ENCODE measurements at regions of chr5 and their contacts with region 1.

Region 1: DNA sequence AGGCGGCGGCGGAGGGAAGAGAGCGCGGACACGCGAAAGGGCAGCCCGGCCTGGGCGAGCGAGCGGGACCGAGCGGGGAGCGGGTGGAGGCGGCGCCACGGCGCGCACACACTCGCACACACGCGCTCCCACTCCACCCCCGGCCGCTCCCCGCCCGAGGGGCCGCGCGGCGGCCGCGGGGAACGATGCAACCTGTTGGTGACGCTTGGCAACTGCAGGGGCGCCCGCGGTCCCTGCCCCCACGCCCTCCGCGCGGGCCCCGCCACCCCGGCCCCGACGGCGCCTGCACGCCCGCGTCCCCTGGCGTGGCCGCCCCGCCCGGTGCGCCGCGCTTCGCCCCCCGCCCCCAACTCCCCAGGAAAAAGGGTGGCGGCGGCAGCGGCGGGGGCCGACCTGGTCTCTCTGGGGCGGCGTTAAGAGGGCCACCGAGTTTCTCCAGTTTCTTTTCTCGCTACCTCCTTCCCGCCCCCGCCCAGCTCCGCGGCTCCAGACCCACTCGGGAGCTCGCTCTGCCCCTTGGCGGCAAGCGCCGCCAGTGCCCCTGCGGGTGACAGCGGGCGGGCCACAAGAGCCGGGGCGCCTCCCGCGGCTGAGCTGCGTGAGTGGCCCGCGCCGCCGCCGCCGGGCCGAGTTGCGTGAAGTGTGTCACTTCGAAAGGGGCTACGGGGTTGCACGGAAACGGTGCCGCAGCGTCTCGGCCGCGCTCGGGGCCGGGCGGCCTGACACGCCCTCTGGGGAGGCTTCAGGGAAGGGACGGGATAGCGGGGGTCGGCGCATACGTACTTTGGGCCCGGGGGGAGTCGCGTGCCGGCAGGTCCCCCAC is at the start of gene NR3C1:
- DNase-seq: peak; percentile 83 to 92 (median 90)
- ATAC-seq: peak; percentile 85
- H3K4me3 ChIP-seq: peak within 1 kb of the TSS; percentile 98
- H3K4me3 Mint-ChIP-seq: peak within 1 kb of the TSS; percentile 93 to 99 (median 96)
- H3K27ac ChIP-seq: peak within 1 kb of the TSS; percentile 91
- H3K27ac Mint-ChIP-seq: peak within 1 kb of the TSS; percentile 98 to 100 (median 99)
- H3K4me1 ChIP-seq: peaks cover 17 to 29% of the 10 kb centered on the region in 2 donors
- H3K4me1 Mint-ChIP-seq: peaks cover 30 to 48% (median 40%) of the 10 kb centered on the region in 7 donors
- H3K27me3 ChIP-seq: no peaks in the 10 kb centered on the region
- H3K27me3 Mint-ChIP-seq: peaks cover 0 to 2% (median 0%) of the 10 kb centered on the region in 5 donors
- total RNA-seq, gene NR3C1: 68.0 to 140 (median 121) TPM

Region 2: DNA sequence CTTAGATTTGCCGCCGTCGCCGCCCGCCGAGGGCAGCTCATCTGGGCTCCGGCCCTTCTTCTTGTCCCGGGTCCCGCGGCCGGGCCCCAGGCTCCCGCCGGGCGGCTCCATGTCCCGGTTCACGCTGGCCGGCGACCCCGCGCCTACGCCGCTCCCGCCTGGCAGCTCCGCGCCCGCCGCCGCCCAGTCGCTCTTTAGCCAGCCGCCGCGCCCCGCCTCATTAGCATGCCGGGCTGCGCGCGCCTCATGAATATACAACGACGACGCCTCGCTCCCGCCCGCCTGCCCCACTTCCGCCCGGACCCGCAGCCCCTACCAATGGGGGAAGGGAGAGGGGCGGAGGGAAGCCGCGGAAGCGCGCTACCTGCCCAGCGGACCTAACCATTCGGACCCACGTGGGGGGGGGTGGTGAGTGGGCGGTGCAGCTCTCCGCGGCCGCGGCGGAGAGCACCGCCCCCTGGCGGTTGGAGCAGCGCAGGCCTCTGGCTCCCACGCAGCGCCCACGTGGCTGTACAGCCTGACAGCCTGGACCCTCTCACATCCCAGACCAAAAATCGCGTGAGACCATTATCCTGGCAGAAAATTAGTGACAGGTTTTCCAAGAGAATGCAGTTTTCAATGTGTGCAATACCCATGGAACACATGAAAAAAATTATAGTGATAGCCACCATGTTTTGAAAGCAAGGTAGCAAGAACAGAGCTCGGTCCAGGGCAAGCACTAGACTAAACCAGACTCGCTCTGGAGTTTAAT is 1784.8 kb before region 1 on chr5 and contains the start of gene DIAPH1:
- CTCF ChIA-PET with region 1: no interaction called
- POLR2A ChIA-PET with region 1: no interaction called
- intact Hi-C with region 1: loop called in 1 of 2 experiments (anchors 10 kb)
- DNase-seq: peak; percentile 91 to 98 (median 96)
- ATAC-seq: peak; percentile 98
- H3K4me3 ChIP-seq: peak within 1 kb of the TSS; percentile 77
- H3K4me3 Mint-ChIP-seq: peak within 1 kb of the TSS; percentile 94 to 100 (median 100)
- H3K27ac ChIP-seq: peak within 1 kb of the TSS; percentile 97
- H3K27ac Mint-ChIP-seq: peak within 1 kb of the TSS; percentile 91 to 99 (median 95)
- H3K4me1 ChIP-seq: peaks cover 11 to 22% of the 10 kb centered on the region in 2 donors
- H3K4me1 Mint-ChIP-seq: peaks cover 44 to 61% (median 56%) of the 10 kb centered on the region in 7 donors
- H3K27me3 ChIP-seq: no peaks in the 10 kb centered on the region
- H3K27me3 Mint-ChIP-seq: no peaks in the 10 kb centered on the region
- total RNA-seq, gene DIAPH1: 163 to 278 (median 173) TPM

Region 3: DNA sequence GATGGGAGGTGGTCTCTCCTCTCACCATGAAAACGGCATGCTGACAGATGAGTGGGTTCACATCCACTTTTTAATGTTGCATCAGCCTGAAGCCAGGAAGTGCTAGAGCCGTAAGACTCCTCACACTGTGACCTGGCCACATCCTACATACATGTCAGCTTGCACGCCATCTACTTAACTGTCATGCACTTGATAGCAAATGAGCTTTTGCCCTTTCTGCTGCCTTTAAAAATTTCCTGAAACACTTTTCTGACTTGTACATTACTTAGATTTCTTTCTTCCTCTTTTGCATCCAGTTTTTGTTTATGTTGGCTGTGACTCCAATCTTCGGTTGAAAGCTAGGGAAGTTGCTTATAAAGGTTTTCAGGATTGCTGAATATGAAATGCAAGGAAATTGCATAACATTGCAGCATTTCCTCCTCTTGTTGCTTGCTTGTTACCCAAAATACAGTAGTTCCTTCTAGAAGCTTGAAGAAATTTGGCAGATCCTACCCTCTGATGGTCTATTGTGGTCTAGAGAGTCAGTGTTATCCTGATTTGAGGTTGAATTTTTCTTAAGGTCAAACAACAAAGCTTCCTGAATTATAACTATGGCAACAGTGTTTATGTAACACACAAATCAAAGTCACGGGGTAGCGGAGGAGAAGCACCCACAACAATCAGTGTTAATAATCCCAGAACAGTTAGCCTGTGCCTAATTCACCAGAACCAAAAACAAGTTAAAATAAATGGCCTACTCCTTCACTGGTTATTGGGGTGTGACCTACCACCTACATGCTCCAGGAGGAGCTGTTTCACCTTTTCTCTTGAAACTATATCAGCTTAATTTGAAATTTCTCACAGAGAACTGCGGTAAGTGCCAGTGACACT is 401.1 kb before region 1 on chr5:
- CTCF ChIA-PET with region 1: interaction called, 6 read pairs
- POLR2A ChIA-PET with region 1: interaction called, 32 read pairs
- intact Hi-C with region 1: loop called (anchors 1 kb)
- DNase-seq: peak in 8 of 9 donors; percentile 40 to 66 (median 50)
- ATAC-seq: peak; percentile 86
- H3K4me3 ChIP-seq: peak overlapping the region; percentile 3
- H3K4me3 Mint-ChIP-seq: peak overlapping the region; percentile 22 to 80 (median 62)
- H3K27ac ChIP-seq: peak overlapping the region; percentile 68
- H3K27ac Mint-ChIP-seq: peak overlapping the region; percentile 78 to 98 (median 90)
- H3K4me1 ChIP-seq: peaks cover 31 to 66% of the 10 kb centered on the region in 2 donors
- H3K4me1 Mint-ChIP-seq: peaks cover 37 to 90% (median 50%) of the 10 kb centered on the region in 7 donors
- H3K27me3 ChIP-seq: no peaks in the 10 kb centered on the region
- H3K27me3 Mint-ChIP-seq: no peaks in the 10 kb centered on the region

Region 4: DNA sequence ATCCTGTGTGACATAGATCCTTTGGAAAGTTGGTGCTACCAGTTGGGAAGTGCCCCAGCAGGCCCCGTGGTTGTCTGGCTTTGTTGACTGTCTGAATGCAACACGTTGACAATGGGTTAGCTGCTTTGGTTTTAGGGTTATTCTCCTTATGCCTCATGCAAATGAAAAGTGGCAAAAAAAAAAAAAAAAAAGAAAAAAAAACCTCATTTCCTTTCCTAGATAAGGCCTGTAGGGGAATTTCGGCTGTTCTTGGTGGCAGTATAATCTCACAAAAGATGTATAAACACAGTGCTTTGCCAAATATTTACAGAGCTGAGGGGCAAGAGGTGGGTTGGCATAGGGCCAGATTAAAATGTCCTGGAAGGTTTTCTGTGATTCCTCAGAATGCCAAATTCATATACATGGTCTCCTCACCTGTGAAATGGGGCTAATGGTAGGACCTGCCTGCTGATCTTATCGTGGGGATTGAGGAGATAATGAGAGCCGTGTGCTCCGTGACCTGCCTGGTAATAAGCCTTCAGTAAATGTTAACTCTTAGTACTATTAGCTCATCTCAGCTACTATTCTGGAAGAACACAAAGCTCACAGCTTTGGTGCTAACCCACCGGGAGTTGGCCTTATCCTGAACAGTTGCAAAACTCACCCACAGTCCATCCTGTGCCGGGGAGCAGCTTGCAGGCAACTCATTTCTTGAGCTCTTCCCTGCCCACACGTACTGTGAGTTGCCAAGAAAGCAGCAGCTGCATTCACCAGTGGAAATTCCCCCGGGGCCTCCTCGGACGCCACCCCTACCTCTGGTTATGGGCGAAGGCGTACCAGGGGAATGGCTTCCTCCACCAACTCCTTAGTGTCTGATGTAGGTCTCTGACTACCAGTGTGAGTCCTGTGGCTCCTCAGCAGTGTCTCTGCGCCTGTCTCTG is 220.6 kb before region 1 on chr5:
- CTCF ChIA-PET with region 1: no interaction called
- POLR2A ChIA-PET with region 1: no interaction called
- intact Hi-C with region 1: loop called in 1 of 2 experiments (anchors 2 kb)
- DNase-seq: peak in 1 of 9 donors; percentile 80
- ATAC-seq: peak; percentile 61
- H3K4me3 ChIP-seq: no peak overlapping the region
- H3K4me3 Mint-ChIP-seq: peak overlapping the region in 1 of 10 donors; percentile 66
- H3K27ac ChIP-seq: no peak overlapping the region
- H3K27ac Mint-ChIP-seq: peak overlapping the region in 1 of 9 donors; percentile 89
- H3K4me1 ChIP-seq: peaks cover 3 to 22% of the 10 kb centered on the region in 2 donors
- H3K4me1 Mint-ChIP-seq: peaks cover 6 to 65% (median 16%) of the 10 kb centered on the region in 7 donors
- H3K27me3 ChIP-seq: no peaks in the 10 kb centered on the region
- H3K27me3 Mint-ChIP-seq: no peaks in the 10 kb centered on the region

Region 5: GRCh38 chr5:143213851-143214363 is 189.9 kb before region 1 on chr5:
- CTCF ChIA-PET with region 1: no interaction called
- POLR2A ChIA-PET with region 1: no interaction called
- intact Hi-C with region 1: no loop called
- DNase-seq: no peak
- ATAC-seq: no peak
- H3K4me3 ChIP-seq: no peak overlapping the region
- H3K4me3 Mint-ChIP-seq: peak overlapping the region in 1 of 10 donors; percentile 50
- H3K27ac ChIP-seq: no peak overlapping the region
- H3K27ac Mint-ChIP-seq: peak overlapping the region in 2 of 9 donors; percentile 27 to 58
- H3K4me1 ChIP-seq: no peaks in the 10 kb centered on the region
- H3K4me1 Mint-ChIP-seq: peaks cover 0 to 34% (median under 1%) of the 10 kb centered on the region in 7 donors
- H3K27me3 ChIP-seq: no peaks in the 10 kb centered on the region
- H3K27me3 Mint-ChIP-seq: no peaks in the 10 kb centered on the region

Region 6: DNA sequence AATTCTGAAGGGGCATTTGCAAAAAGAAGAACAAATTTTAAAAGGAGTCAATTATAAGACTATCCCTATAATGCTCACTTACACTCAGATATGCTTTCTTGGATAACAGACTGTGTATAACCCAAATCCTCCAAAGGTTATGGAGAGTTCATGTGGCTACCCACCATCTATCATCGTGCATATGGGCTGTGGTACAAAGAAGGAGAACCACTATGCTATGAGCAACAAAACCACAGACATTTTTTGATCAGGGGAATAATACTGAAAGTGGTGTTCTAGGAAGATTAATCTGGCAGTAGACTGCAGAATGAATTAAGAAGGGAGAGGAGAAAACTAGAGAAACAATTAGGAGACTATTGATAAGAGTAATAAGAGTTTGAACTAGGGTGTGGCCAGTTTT is 17.1 kb before region 1 on chr5:
- CTCF ChIA-PET with region 1: interaction called, 8 read pairs
- POLR2A ChIA-PET with region 1: interaction called, 8 read pairs
- intact Hi-C with region 1: loop called in 1 of 2 experiments (anchors 2 kb)
- DNase-seq: no peak
- ATAC-seq: no peak
- H3K4me3 ChIP-seq: no peak overlapping the region
- H3K4me3 Mint-ChIP-seq: peak overlapping the region in 4 of 10 donors; percentile 5 to 23 (median 18)
- H3K27ac ChIP-seq: no peak overlapping the region
- H3K27ac Mint-ChIP-seq: peak overlapping the region in 3 of 9 donors; percentile 12 to 70 (median 37)
- H3K4me1 ChIP-seq: peaks cover 13 to 17% of the 10 kb centered on the region in 2 donors
- H3K4me1 Mint-ChIP-seq: peaks cover 35 to 97% (median 83%) of the 10 kb centered on the region in 7 donors
- H3K27me3 ChIP-seq: no peaks in the 10 kb centered on the region
- H3K27me3 Mint-ChIP-seq: no peaks in the 10 kb centered on the region

Region 7: GRCh38 chr5:143824851-143825720 is 421.3 kb after region 1 on chr5:
- CTCF ChIA-PET with region 1: no interaction called
- POLR2A ChIA-PET with region 1: no interaction called
- intact Hi-C with region 1: loop called (anchors 1 to 2 kb)
- DNase-seq: peak; percentile 56 to 86 (median 75)
- ATAC-seq: peak; percentile 94
- H3K4me3 ChIP-seq: no peak overlapping the region
- H3K4me3 Mint-ChIP-seq: no peak overlapping the region
- H3K27ac ChIP-seq: no peak overlapping the region
- H3K27ac Mint-ChIP-seq: no peak overlapping the region
- H3K4me1 ChIP-seq: peaks cover 0 to 6% of the 10 kb centered on the region in 2 donors
- H3K4me1 Mint-ChIP-seq: peaks cover 0 to 18% (median 10%) of the 10 kb centered on the region in 7 donors
- H3K27me3 ChIP-seq: no peaks in the 10 kb centered on the region
- H3K27me3 Mint-ChIP-seq: peaks cover 0 to 5% (median 3%) of the 10 kb centered on the region in 5 donors

Measured in naive thymus-derived CD4-positive, alpha-beta T cell (primary cell).